ENCODE measurements at regions of chr12 and their contacts with region 1.

Region 1: DNA sequence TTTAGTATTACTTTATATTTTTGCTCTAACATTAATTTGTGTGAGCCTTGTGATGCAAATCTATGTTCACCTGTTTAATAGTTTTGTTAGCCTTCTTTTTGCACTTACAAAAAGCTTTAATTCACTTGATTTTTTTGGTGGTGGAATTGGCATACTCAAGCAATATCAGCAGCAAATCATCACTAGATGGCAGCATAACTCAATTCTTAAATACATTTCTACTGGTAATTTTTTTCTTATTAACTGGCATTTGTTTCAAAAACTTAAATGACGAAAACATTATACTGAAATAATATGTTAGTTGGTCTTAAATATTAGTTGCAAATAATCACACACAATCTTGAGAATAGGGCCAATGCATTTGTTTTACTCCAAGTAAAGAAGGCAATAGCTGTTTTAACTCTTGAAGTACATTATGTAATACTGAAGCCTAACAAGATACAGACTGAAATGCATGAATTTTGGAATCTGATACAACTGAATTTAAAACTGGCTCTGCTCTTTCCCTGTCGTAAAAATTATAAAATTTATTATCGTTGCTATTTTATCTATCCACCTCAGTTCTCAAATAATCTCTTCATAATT is 151.5 kb downstream of the ATXN7L3B start:
- DNase-seq: peak; percentile 49
- H3K4me3 ChIP-seq: no peak overlapping the region
- H3K27ac ChIP-seq: no peak overlapping the region
- H3K4me1 ChIP-seq: no peaks in the 10 kb centered on the region
- H3K27me3 ChIP-seq: peaks cover 1 to 2% of the 10 kb centered on the region in 2 experiments
- CTCF ChIP-seq: peak; percentile 35 to 37
- POLR2A ChIP-seq: no peak

Region 2: GRCh38 chr12:74801625-74802024 is 112.5 kb after region 1 on chr12:
- CTCF ChIA-PET with region 1: no interaction called
- POLR2A ChIA-PET with region 1: no interaction called
- dilution Hi-C with region 1: no loop called
- intact Hi-C with region 1: loop called (anchors 5 kb)
- DNase-seq: no peak
- H3K4me3 ChIP-seq: no peak overlapping the region
- H3K27ac ChIP-seq: no peak overlapping the region
- H3K4me1 ChIP-seq: no peaks in the 10 kb centered on the region
- H3K27me3 ChIP-seq: no peaks in the 10 kb centered on the region
- CTCF ChIP-seq: no peak
- POLR2A ChIP-seq: no peak

Region 3: DNA sequence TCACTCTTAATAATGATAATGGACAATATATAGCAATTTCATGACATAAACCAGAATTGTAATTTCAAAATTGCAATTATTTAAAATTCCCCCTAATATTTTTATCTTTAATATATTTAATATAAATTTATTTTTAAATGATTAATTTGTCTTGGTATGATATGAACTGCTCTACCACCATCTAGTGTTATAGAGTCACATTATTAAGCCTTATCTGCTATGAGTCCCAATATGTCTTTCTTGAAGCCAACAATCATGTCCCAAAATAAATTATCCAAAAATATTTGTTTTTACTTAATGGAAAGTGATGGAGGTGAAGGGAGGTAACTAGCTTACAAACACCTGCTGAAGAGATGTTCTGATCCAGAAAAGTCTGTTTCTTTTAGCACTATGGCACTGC is 369.1 kb after region 1 on chr12:
- CTCF ChIA-PET with region 1: interaction called, 10 read pairs
- POLR2A ChIA-PET with region 1: no interaction called
- dilution Hi-C with region 1: no loop called
- intact Hi-C with region 1: no loop called
- DNase-seq: no peak
- H3K4me3 ChIP-seq: no peak overlapping the region
- H3K27ac ChIP-seq: no peak overlapping the region
- H3K4me1 ChIP-seq: no peaks in the 10 kb centered on the region
- H3K27me3 ChIP-seq: no peaks in the 10 kb centered on the region
- CTCF ChIP-seq: no peak
- POLR2A ChIP-seq: no peak

Region 4: DNA sequence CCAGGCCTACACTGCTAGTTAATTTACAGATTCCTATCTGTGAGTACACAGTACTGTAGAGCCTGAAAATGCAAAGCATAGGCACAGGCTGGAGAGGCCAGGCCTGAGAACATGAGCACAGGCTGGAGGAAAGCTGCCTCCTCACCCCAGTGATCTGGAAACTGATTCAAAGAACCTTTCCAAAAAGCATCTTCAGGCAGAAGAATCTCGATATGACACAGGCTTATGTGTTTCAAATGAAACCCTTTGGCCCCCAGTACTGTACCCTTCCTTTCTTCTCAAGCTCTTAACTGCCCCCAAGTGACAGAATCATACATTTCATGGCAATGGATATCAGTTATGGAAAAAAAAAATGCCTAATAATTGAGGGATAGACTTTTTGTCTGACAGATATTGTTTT is 398.5 kb after region 1 on chr12:
- CTCF ChIA-PET with region 1: interaction called, 9 read pairs
- POLR2A ChIA-PET with region 1: no interaction called
- dilution Hi-C with region 1: no loop called
- intact Hi-C with region 1: loop called (anchors 1 kb)
- DNase-seq: no peak
- H3K4me3 ChIP-seq: no peak overlapping the region
- H3K27ac ChIP-seq: no peak overlapping the region
- H3K4me1 ChIP-seq: no peaks in the 10 kb centered on the region
- H3K27me3 ChIP-seq: no peaks in the 10 kb centered on the region
- CTCF ChIP-seq: no peak
- POLR2A ChIP-seq: no peak

Region 5: DNA sequence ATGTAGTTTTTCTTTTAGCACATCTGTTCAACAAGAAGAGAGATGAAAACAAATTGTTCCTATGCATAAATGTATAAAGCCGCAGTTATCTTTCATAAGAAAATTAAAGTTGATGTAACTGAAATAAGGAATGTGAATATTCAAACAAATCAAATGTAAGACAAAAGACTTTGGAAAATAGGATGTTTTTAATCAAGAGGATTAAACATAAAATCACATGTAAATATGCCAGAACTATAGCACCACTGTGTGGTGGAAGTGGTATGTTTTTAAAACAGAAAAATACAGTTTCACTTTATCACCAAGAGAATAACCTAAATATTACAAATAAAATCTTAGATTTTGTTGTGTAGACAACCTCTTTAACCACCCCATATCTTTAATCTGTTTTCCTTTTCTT is 600.6 kb after region 1 on chr12:
- CTCF ChIA-PET with region 1: interaction called, 31 read pairs
- POLR2A ChIA-PET with region 1: no interaction called
- dilution Hi-C with region 1: no loop called
- intact Hi-C with region 1: loop called (anchors 1 kb)
- DNase-seq: peak; percentile 22
- H3K4me3 ChIP-seq: no peak overlapping the region
- H3K27ac ChIP-seq: no peak overlapping the region
- H3K4me1 ChIP-seq: no peaks in the 10 kb centered on the region
- H3K27me3 ChIP-seq: no peaks in the 10 kb centered on the region
- CTCF ChIP-seq: no peak
- POLR2A ChIP-seq: no peak

Region 6: DNA sequence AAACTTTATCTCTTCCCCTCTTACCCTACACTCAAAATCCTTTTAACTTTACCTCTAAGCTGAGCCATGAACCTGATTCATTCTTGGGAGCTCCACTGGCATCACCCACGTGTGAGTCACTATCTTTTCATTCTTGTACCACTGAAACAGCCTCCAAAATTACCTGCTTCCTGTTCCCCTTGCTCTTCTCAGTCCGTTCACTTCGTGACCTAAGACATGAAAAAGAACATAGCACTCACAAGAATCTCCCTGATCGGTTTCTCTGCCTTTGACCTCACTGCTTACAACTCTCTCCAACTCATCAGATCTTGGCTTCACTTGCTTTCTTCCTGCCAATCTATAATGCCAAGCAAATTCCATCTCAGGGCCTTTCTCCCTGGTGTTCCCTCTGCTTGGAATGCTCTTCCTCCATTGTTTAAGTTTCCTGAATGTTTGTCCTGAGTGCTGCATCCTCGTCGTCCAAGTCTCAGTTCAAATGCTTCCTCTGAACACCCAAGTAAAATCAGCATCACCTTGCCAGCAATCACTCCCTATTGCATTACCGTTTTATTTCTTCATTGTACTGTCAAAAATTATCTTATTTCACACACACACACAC is 800.5 kb after region 1 on chr12:
- CTCF ChIA-PET with region 1: interaction called, 9 read pairs
- POLR2A ChIA-PET with region 1: no interaction called
- dilution Hi-C with region 1: no loop called
- intact Hi-C with region 1: loop called (anchors 5 kb)
- DNase-seq: peak; percentile 52
- H3K4me3 ChIP-seq: no peak overlapping the region
- H3K27ac ChIP-seq: peak overlapping the region; percentile 28
- H3K4me1 ChIP-seq: peaks cover 14% of the 10 kb centered on the region
- H3K27me3 ChIP-seq: no peaks in the 10 kb centered on the region
- CTCF ChIP-seq: no peak
- POLR2A ChIP-seq: no peak

Region 7: DNA sequence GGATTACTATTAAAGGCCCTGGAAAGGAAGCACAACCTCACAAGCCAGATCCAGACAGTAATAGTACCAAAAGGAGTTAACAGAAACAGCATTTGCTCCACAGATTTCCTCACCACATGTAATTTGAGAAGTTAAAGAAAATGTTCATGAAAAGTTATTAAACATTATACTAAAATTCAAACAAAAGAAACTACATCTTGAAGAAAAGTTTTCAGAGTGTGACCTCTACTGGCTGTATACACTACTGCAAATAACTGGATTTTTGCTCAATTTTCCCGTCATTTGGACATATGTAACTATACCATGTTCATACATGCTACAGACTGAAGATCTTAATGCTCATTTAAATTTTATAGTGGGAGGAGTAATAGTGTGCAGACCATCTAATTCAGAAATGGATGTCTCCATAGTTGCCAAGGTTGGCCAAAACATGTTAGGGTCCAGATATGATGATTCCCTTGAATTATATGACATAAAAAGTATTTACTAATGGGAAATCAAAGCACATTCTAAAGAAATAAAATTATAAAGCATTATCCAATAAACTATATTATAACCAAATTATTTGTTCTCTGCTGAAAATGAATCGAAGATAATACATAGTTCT is 816.6 kb after region 1 on chr12:
- CTCF ChIA-PET with region 1: interaction called, 9 read pairs
- POLR2A ChIA-PET with region 1: no interaction called
- dilution Hi-C with region 1: no loop called
- intact Hi-C with region 1: loop called (anchors 5 kb)
- DNase-seq: peak; percentile 60
- H3K4me3 ChIP-seq: no peak overlapping the region
- H3K27ac ChIP-seq: no peak overlapping the region
- H3K4me1 ChIP-seq: peaks cover 8% of the 10 kb centered on the region
- H3K27me3 ChIP-seq: no peaks in the 10 kb centered on the region
- CTCF ChIP-seq: peak; percentile 32 to 50
- POLR2A ChIP-seq: peak; percentile 38

Measured in endothelial cell of umbilical vein (primary cell).